ENCODE measurements at regions of chr6 and their contacts with region 1.

Region 1: GRCh38 chr6:158677906-158678578 is 28.2 kb downstream of the SYTL3 start:
- DNase-seq: no peak
- H3K4me3 ChIP-seq: no peak overlapping the region
- H3K27ac ChIP-seq: no peak overlapping the region
- H3K27me3 ChIP-seq: no peaks in the 10 kb centered on the region
- CTCF ChIP-seq: no peak

Region 2: DNA sequence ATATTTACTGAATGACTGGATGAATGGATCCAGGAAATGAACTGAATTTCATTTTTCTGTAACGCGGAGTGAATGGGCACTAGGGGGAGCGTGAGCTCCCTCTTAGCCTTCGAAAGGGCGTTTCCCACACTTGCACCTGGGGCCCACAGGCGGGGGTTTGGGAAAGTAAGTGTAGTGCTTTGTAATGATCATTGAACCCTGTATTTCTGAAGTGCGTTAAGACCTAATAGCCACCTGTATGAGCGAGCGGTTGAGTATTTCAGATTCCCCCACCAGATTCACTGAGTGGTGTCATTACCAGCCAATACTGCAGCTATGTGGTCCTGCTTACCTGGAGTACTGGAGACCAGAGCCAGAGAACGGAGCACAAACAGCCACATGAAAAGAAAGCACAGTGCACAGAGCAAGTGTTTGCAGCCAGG is 17.7 kb before region 1 on chr6:
- CTCF ChIA-PET with region 1: interaction called, 8 read pairs
- POLR2A ChIA-PET with region 1: interaction called, 10 read pairs
- DNase-seq: no peak
- H3K4me3 ChIP-seq: no peak overlapping the region
- H3K27ac ChIP-seq: no peak overlapping the region
- H3K27me3 ChIP-seq: peaks cover 2% of the 10 kb centered on the region
- CTCF ChIP-seq: peak; percentile 70

Measured in AG04450 (cell line).